ENCODE measurements at regions of chr4 and their contacts with region 1.

Region 1: DNA sequence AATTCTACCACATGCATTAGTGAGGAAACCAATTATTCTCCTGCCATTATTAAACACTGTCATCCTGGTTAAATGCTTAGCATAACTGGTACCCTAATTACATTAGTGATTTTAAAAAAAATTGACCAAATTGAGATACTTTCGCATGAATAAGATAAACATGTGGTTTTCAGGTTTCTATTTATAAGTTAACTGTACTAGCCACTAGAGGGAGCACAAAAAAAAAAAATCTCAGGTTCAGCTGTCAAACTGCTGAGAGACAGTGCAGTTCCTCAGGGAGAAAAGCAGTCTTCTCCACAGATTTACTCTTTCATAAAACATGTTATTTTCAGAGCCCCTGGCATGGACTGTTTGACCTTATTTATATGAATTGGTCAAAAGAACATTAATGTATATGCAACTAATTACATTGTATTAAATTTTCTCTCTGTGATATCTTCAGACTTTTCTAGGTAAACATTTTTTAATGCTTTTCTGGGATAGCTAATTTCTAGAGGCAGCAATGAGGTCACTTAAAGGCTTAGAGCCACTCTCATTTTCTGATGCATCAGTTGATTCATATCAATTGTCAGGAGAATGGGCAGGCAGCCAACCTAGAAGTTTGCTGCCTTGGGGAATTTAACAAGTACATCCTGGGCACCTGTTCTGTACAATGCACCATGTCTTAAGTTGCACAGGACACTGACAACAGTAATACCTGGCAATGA is 167.5 kb downstream of the CDS1 start:
- DNase-seq: peak in 4 of 42 donors; percentile 9 to 39 (median 24)

Region 2: GRCh38 chr4:84681486-84682274 is 68.7 kb before region 1 on chr4:
- intact Hi-C with region 1: no loop called
- DNase-seq: peak in 10 of 42 donors; percentile 16 to 62 (median 36)

Region 3: DNA sequence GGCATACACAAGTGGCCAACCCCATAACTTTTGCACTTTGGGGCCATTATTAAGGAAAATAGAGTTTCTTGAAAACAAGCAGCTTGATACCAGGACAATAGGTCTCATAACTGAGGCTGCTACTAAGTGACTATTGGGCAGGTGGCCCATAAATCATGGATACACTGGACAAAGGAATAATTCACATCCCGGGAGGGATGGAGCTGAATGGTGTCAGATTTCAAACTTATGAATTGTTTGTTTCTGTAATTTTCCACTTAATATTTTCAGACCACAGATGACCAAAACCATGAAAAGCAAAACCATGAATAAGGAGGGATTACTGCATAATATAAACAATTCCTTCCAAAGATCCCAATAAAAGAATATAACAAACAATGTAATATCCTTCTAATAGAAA is 101.7 kb after region 1 on chr4:
- intact Hi-C with region 1: no loop called
- DNase-seq: peak in 16 of 42 donors; percentile 16 to 82 (median 40)

Region 4: GRCh38 chr4:84966383-84967242 is 216.2 kb after region 1 on chr4 and contains the start of gene WDFY3:
- intact Hi-C with region 1: loop called (anchors 2 kb)
- DNase-seq: peak; percentile 69 to 97 (median 88)